Activated CD4-positive, alpha-beta T cell treated with anti-CD3 and anti-CD28 coated beads for 36 hours (primary cell): ENCODE measurements at regions of chr12 and their contacts with region 1.

Region 1: GRCh38 chr12:132828706-132829534 is at the start of gene GOLGA3:
- DNase-seq: peak; percentile 98
- ATAC-seq: peak; percentile 89
- H3K4me3 Mint-ChIP-seq: peak within 1 kb of the TSS; percentile 93
- H3K27ac Mint-ChIP-seq: peak within 1 kb of the TSS; percentile 100
- H3K4me1 Mint-ChIP-seq: peaks cover 44% of the 10 kb centered on the region
- H3K27me3 Mint-ChIP-seq: no peaks in the 10 kb centered on the region
- total RNA-seq, gene GOLGA3: 36.7 to 38.5 TPM

Region 2: DNA sequence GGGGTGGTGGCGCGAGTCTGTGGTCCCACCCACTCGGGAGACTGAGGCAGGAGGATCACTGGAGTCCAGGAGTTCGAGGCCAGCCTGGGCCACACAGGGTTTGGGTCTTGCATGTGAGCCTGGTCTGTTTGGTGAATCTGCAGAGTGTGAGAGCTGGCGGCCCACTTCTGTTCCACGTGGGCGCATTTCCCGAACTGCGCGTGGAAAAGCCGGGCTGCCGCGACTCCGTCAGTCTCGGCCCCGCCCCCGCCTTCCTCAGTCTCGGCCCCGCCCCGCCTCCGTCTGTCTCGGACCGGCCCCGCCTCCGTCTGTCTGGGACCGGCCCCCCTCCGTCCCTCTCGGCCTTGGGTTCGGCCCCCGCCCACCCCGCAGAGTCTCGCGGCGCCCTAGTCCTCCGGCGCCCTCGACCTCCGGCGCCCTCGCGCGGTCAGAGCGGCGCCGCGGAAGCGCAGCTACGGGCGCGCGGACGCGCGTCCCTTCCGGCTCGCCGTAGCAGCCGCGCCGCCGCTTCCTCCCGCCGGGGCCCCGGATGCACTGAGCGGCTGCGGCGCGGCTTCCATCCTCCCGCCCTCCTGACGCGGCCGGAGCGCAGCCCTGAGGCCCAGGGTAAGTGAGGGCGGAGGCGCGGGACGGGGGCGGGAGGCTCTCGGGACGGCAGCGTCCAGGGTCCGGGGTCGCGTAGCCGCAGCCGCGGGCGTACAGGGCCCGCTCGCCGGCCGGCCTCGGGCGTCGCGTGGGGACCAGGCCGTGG is 879.3 kb before region 1 on chr12 and contains the start of gene EP400:
- CTCF ChIA-PET with region 1: no interaction called
- POLR2A ChIA-PET with region 1: no interaction called
- intact Hi-C with region 1: loop called in 1 of 2 experiments (anchors 2 kb)
- DNase-seq: peak; percentile 97
- ATAC-seq: peak; percentile 96
- H3K4me3 Mint-ChIP-seq: peak within 1 kb of the TSS; percentile 88
- H3K27ac Mint-ChIP-seq: peak within 1 kb of the TSS; percentile 93
- H3K4me1 Mint-ChIP-seq: peaks cover 42% of the 10 kb centered on the region
- H3K27me3 Mint-ChIP-seq: no peaks in the 10 kb centered on the region
- total RNA-seq, gene EP400: 46.4 to 51.3 TPM

Region 3: GRCh38 chr12:132710422-132711168 is 118.3 kb before region 1 on chr12 and contains the start of gene PGAM5:
- CTCF ChIA-PET with region 1: no interaction called
- POLR2A ChIA-PET with region 1: no interaction called
- intact Hi-C with region 1: loop called in 1 of 2 experiments (anchors 1 kb)
- DNase-seq: peak; percentile 92
- ATAC-seq: peak; percentile 92
- H3K4me3 Mint-ChIP-seq: peak within 1 kb of the TSS; percentile 75
- H3K27ac Mint-ChIP-seq: peak within 1 kb of the TSS; percentile 66
- H3K4me1 Mint-ChIP-seq: peaks cover 24% of the 10 kb centered on the region
- H3K27me3 Mint-ChIP-seq: no peaks in the 10 kb centered on the region
- total RNA-seq, gene PGAM5: 65.6 to 74.0 TPM

Region 4: DNA sequence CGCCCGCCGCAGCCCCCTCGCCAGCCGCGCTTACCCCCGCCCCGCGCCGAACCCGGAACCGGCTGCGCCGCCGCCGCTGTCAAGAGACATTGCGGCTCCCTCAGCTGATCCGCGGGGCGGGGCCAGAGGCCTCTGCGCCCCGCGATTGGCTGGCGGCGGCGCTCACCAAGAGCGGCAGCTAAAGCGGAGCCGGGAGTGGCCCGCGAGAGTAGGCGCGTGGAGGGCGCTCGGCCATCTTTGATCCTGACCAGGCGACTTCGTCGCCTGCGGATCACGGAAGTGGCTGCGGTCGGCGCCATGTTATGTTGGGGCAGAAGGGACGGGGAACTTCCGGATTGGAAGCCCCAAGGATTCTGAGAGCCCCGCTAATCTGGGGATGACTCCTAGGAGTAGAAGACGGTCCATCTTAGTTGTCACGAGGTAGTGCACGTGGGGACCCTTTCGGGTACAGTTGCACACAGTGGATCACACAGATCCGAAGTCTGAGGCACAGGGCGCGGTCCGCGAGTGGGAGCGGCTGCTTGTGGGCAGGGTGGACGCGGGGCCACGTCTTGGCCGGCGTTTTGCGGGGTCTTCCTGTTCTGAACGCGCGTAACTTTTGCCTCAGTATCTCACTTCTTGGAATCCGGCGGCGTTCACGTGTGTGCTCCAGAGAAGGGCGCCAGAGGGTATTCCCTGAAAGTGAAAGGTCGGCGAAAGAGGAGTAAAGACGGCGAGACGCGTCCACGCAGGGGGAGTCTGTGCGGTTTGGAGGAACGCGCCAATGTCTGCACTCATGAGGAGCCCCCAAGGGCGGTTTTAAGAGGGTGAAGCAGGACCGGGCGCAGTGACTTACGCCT is 58.8 kb after region 1 on chr12 and contains the start of gene CHFR:
- CTCF ChIA-PET with region 1: no interaction called
- POLR2A ChIA-PET with region 1: interaction called, 3 read pairs
- intact Hi-C with region 1: loop called (anchors 1 to 5 kb)
- DNase-seq: peak; percentile 98
- ATAC-seq: peak; percentile 99
- H3K4me3 Mint-ChIP-seq: peak within 1 kb of the TSS; percentile 99
- H3K27ac Mint-ChIP-seq: peak within 1 kb of the TSS; percentile 100
- H3K4me1 Mint-ChIP-seq: peaks cover 21% of the 10 kb centered on the region
- H3K27me3 Mint-ChIP-seq: no peaks in the 10 kb centered on the region
- total RNA-seq, gene CHFR: 36.5 to 36.8 TPM

Region 5: GRCh38 chr12:132986001-132986912 is 157.3 kb after region 1 on chr12 and contains the start of gene ZNF26:
- CTCF ChIA-PET with region 1: no interaction called
- POLR2A ChIA-PET with region 1: no interaction called
- intact Hi-C with region 1: loop called in 1 of 2 experiments (anchors 1 kb)
- DNase-seq: peak; percentile 94
- ATAC-seq: peak; percentile 97
- H3K4me3 Mint-ChIP-seq: peak within 1 kb of the TSS; percentile 79
- H3K27ac Mint-ChIP-seq: peak within 1 kb of the TSS; percentile 96
- H3K4me1 Mint-ChIP-seq: peaks cover 26% of the 10 kb centered on the region
- H3K27me3 Mint-ChIP-seq: peaks cover 4% of the 10 kb centered on the region
- total RNA-seq, gene ZNF26: 12.3 to 17.0 TPM

Region 6: DNA sequence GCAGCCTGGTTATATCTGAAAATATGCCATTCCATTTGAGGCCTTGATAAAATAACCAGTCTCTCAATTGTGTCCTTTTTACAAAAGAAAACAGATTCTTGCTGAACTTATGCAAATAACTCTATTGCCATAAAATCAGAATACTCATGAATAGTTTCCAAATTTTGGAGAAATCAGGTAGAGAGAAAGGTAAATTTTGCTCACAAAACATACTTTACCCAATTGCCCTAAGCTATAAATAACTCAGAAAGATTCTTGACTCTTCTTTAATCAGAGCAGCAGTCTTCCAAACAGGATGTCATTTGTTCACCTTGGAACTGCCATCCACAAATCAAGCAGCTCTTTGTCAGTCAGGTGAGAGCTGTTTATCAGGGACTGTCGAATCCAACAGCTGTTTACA is 169.8 kb after region 1 on chr12:
- CTCF ChIA-PET with region 1: no interaction called
- POLR2A ChIA-PET with region 1: no interaction called
- intact Hi-C with region 1: no loop called
- DNase-seq: no peak
- ATAC-seq: no peak
- H3K4me3 Mint-ChIP-seq: no peak overlapping the region
- H3K27ac Mint-ChIP-seq: no peak overlapping the region
- H3K4me1 Mint-ChIP-seq: peaks cover 5% of the 10 kb centered on the region
- H3K27me3 Mint-ChIP-seq: no peaks in the 10 kb centered on the region

Region 7: DNA sequence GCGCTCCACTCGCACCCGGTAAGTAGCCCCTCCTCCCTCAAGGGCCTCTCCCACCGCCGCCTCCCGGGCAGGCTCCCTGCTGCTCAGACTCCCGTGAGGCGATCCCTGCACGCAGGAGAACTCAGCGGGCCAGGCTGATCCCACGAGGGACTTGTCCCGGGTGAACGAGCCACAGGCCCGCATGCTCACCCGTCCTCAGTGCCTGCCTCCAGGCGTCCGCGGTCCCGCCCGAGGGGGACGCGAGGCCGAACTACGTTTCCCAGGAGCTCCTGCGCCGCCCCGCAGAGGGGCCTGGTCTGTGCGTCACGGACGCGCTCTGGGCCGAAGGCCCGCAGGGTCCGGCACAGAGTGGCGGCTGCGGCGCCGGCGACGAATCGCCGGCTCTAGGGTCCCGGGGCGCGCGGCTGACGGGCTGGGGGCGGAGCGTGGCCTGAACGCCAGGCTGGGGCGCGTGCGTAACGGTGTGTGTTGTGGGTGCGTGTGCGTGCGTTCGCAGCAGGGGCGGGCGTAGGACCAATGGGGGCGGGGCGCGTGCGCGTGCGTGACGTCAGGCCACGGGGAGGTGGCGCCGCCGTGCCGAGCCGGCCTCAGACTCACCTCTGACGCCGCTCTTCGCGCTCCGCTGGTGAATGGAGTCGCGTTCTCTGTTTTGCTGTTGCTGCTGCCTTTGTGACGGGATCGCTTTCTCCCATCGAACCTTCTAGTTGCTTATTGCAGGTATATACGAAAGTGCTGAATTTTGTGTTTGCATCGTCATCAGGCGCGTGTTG is 301.3 kb after region 1 on chr12 and contains the starts of genes ZNF10 and ZNF891:
- CTCF ChIA-PET with region 1: no interaction called
- POLR2A ChIA-PET with region 1: no interaction called
- intact Hi-C with region 1: loop called in 1 of 2 experiments (anchors 1 kb)
- DNase-seq: peak; percentile 98
- ATAC-seq: peak; percentile 90
- H3K4me3 Mint-ChIP-seq: peak within 1 kb of the TSS; percentile 86
- H3K27ac Mint-ChIP-seq: peak within 1 kb of the TSS; percentile 98
- H3K4me1 Mint-ChIP-seq: peaks cover 15% of the 10 kb centered on the region
- H3K27me3 Mint-ChIP-seq: no peaks in the 10 kb centered on the region
- total RNA-seq, gene ZNF10: 4.8 to 5.1 TPM
- total RNA-seq, gene ZNF891: 1.9 to 2.1 TPM